ENCODE measurements at regions of chr10 and their contacts with region 1.

Region 1: DNA sequence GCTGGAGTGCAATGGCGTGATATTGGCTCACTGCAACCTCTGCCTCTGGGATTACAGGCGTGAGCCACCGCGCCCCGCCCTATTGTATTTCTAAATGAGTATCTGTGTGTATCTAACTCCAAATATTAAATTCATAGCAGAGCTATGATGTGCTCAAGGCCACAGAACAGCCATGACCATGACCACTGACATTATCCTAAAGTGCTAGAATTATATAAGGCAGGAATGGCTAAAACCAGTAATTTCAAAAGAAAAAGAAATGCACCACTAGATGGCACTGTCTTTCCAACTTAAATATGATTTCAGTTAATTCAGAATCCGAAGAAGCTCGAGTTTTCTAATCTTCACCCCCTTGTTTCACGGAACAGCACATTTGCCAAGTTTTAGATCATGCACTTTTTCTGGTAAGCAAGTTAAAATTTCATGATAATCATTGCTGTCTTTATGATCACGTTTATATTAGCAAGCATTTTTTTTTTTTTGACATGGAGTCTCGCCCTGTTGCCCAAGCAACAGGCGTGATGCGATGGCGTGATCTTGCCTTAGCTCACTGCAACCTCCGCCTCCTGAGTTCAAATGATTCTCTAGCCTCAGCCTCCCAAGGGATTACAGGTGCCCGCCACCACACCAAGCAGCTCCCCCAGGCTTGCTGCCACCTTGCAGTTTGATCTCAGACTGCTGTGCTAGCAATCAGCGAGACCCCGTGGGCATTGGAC is 65.3 kb downstream of the OR13A1 start:
- DNase-seq: peak in 2 of 35 experiments; percentile 17 to 62
- ATAC-seq: peak in 2 of 4 experiments; percentile 33 to 44
- H3K4me3 ChIP-seq: no peak overlapping the region
- H3K4me3 Mint-ChIP-seq: peak overlapping the region in 1 of 3 donors; percentile 38
- H3K27ac ChIP-seq: no peak overlapping the region
- H3K27ac Mint-ChIP-seq: no peak overlapping the region
- H3K4me1 ChIP-seq: no peaks in the 10 kb centered on the region
- H3K4me1 Mint-ChIP-seq: peaks cover 5 to 6% (median 6%) of the 10 kb centered on the region in 3 donors
- H3K27me3 ChIP-seq: peaks cover 0 to 8% of the 10 kb centered on the region in 2 experiments
- H3K27me3 Mint-ChIP-seq: peaks cover 0 to 8% of the 10 kb centered on the region in 2 donors

Region 2: GRCh38 chr10:44465401-44466115 is 784.6 kb before region 1 on chr10:
- CTCF ChIA-PET with region 1: no interaction called
- POLR2A ChIA-PET with region 1: no interaction called
- DNase-seq: no peak
- ATAC-seq: no peak
- H3K4me3 ChIP-seq: no peak overlapping the region
- H3K4me3 Mint-ChIP-seq: no peak overlapping the region
- H3K27ac ChIP-seq: no peak overlapping the region
- H3K27ac Mint-ChIP-seq: no peak overlapping the region
- H3K4me1 ChIP-seq: no peaks in the 10 kb centered on the region
- H3K4me1 Mint-ChIP-seq: no peaks in the 10 kb centered on the region
- H3K27me3 ChIP-seq: peaks cover 0 to 12% of the 10 kb centered on the region in 2 experiments
- H3K27me3 Mint-ChIP-seq: peaks cover 0 to 21% of the 10 kb centered on the region in 2 donors

Region 3: GRCh38 chr10:45220931-45221330 is 29.2 kb before region 1 on chr10:
- CTCF ChIA-PET with region 1: interaction called in 1 of 2 experiments, 11 read pairs
- POLR2A ChIA-PET with region 1: no interaction called
- DNase-seq: no peak
- ATAC-seq: no peak
- H3K4me3 ChIP-seq: no peak overlapping the region
- H3K4me3 Mint-ChIP-seq: no peak overlapping the region
- H3K27ac ChIP-seq: no peak overlapping the region
- H3K27ac Mint-ChIP-seq: no peak overlapping the region
- H3K4me1 ChIP-seq: no peaks in the 10 kb centered on the region
- H3K4me1 Mint-ChIP-seq: no peaks in the 10 kb centered on the region
- H3K27me3 ChIP-seq: no peaks in the 10 kb centered on the region
- H3K27me3 Mint-ChIP-seq: peaks cover 2 to 3% of the 10 kb centered on the region in 2 donors

Region 4: GRCh38 chr10:45239642-45240041 is 10.5 kb before region 1 on chr10:
- CTCF ChIA-PET with region 1: interaction called, 7 to 17 read pairs
- POLR2A ChIA-PET with region 1: no interaction called
- DNase-seq: no peak
- ATAC-seq: no peak
- H3K4me3 ChIP-seq: no peak overlapping the region
- H3K4me3 Mint-ChIP-seq: no peak overlapping the region
- H3K27ac ChIP-seq: no peak overlapping the region
- H3K27ac Mint-ChIP-seq: no peak overlapping the region
- H3K4me1 ChIP-seq: peaks cover 0 to 16% of the 10 kb centered on the region in 2 experiments
- H3K4me1 Mint-ChIP-seq: peaks cover 16 to 24% (median 18%) of the 10 kb centered on the region in 3 donors
- H3K27me3 ChIP-seq: no peaks in the 10 kb centered on the region
- H3K27me3 Mint-ChIP-seq: no peaks in the 10 kb centered on the region

Region 5: GRCh38 chr10:45302573-45302972 is 52.4 kb after region 1 on chr10:
- CTCF ChIA-PET with region 1: no interaction called
- POLR2A ChIA-PET with region 1: no interaction called
- DNase-seq: no peak
- ATAC-seq: no peak
- H3K4me3 ChIP-seq: no peak overlapping the region
- H3K4me3 Mint-ChIP-seq: no peak overlapping the region
- H3K27ac ChIP-seq: no peak overlapping the region
- H3K27ac Mint-ChIP-seq: no peak overlapping the region
- H3K4me1 ChIP-seq: no peaks in the 10 kb centered on the region
- H3K4me1 Mint-ChIP-seq: peaks cover 0 to 8% (median 7%) of the 10 kb centered on the region in 3 donors
- H3K27me3 ChIP-seq: peaks cover 0 to 18% of the 10 kb centered on the region in 2 experiments
- H3K27me3 Mint-ChIP-seq: peaks cover 17 to 24% of the 10 kb centered on the region in 2 donors

Region 6: DNA sequence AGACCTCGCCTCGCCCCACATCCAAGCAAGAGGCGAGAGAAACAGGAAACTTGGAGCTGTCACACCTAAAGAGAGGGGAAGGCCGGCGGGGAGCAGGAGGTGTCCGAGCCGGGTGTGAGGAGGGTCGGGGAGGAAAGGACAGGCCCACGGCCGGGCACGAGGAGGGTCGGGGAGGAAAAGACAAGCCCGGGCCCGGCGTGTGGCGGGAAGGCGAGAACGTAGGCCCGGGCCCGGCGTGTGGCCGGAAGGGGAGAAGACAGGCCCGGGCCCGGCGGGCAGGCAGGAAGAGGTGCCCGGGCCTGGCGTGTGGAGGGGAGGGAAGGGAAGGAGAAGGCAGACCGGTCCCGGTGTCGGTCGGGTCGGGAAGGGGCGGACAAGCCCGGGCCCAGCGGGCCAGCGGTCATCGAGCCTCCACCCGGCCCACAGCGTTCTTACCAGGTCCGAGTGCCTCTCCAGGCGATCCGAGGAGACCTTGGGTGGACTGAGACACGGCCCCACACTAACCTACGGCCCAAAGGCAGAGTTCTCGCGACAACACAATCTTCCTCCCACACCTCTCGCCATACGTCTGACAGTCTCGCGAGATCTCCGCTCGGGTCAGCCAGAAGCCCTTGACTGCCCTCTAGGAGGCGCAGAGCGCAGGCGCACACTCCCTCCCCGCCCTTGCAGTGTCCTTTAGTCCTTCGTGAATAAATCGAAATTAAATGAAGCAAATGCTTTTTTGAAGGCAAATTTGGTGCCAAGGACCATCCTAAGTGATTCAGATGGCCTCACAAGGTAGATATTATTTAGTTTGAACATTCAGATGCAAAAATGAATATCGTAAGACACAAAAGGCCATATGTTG is 780.2 kb after region 1 on chr10 and contains the start of gene NCOA4:
- CTCF ChIA-PET with region 1: interaction called in 1 of 2 experiments, 13 read pairs
- POLR2A ChIA-PET with region 1: no interaction called
- DNase-seq: peak; percentile 85 to 99 (median 94)
- ATAC-seq: peak; percentile 97 to 98 (median 97)
- H3K4me3 ChIP-seq: peak within 1 kb of the TSS; percentile 75 to 90
- H3K4me3 Mint-ChIP-seq: peak within 1 kb of the TSS; percentile 97 to 98 (median 98)
- H3K27ac ChIP-seq: peak within 1 kb of the TSS; percentile 83
- H3K27ac Mint-ChIP-seq: peak within 1 kb of the TSS; percentile 98
- H3K4me1 ChIP-seq: peaks cover 37 to 39% of the 10 kb centered on the region in 2 experiments
- H3K4me1 Mint-ChIP-seq: peaks cover 50 to 54% (median 53%) of the 10 kb centered on the region in 3 donors
- H3K27me3 ChIP-seq: no peaks in the 10 kb centered on the region
- H3K27me3 Mint-ChIP-seq: no peaks in the 10 kb centered on the region
- total RNA-seq, gene NCOA4: 60.1 to 86.8 (median 75.3) TPM

Measured in T-cell (primary cell).